GM10248 (cell line): ENCODE measurements at regions of chr12 and their contacts with region 1.

Region 1: GRCh38 chr12:54379401-54380201 is 4.9 kb downstream of the ZNF385A start:
- DNase-seq: peak; percentile 93
- CTCF ChIP-seq: peak; percentile 100

Region 2: DNA sequence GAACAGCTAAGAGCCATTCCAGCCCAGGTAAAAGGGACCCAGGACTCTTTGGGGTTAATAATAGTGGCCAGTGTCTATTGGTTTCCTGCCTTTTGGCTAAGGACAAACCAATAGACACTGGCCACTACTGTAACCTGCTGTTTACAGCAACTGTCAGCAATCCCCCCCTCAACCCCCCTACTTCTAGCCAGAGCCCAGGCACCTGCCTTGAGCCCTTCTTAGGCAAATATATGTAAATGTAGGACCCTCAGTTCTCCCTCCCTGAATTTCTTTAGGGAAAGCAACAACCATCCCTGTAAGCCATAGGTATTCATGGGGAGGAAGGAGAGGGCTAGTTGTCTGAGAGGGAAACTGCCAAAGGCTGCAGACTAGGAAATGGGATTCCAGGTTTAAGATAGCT is 303.6 kb before region 1 on chr12:
- CTCF ChIA-PET with region 1: no interaction called
- POLR2A ChIA-PET with region 1: no interaction called
- DNase-seq: no peak
- CTCF ChIP-seq: no peak

Region 3: DNA sequence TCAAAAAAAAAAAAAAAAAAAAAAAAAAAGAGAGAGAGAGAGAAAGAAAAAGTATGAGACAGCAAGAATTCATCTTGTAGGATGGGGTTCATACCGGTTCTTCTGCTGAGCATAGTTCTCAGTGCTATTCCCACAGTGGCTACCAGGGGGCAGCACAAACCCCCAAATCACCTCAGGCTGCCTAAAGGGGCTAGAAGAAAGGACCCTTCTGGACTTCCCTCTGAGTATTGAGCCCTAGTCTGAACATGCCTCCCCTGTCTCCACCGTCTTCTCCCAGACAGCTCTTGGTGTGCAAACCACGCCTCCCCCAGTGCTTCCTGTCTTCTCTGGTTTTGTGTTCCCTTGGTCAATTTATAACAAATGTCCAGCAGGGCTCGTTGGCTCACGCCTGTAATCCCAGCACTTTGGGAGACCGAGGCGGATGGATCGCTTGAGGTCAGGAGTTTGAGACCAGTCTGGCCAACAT is 159.5 kb before region 1 on chr12:
- CTCF ChIA-PET with region 1: interaction called, 35 read pairs
- POLR2A ChIA-PET with region 1: no interaction called
- DNase-seq: peak; percentile 69
- CTCF ChIP-seq: peak; percentile 89

Region 4: DNA sequence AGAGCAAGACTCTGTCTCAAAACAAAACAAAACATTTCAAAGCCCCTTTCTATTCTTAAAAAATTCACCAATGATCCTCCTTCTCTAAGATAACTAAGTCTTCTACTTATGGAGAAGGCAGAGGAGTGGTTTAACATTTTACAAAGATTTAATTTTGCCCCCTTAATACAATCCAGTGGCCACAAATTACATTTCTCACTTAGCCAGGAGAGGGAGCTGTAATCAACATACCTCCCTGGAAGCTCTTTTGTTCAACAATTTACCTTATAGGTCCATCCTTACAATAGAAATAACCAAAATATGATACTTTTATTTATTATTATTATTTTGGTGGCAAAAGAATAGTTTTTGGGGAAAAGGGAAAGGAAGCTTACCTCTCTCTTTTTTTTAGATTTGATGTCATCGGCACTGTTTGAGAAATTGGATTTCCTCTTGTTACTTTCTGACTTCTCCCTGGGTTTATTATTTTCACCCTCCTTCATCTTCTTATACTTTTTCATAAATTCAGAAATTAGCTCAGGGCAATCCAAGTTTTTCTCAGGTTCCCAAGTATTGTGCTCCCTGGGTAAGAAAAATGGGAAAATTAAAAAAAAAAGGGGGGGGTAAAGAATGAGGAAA is 127.8 kb before region 1 on chr12:
- CTCF ChIA-PET with region 1: interaction called, 39 read pairs
- POLR2A ChIA-PET with region 1: no interaction called
- DNase-seq: peak; percentile 65
- CTCF ChIP-seq: peak; percentile 66

Region 5: DNA sequence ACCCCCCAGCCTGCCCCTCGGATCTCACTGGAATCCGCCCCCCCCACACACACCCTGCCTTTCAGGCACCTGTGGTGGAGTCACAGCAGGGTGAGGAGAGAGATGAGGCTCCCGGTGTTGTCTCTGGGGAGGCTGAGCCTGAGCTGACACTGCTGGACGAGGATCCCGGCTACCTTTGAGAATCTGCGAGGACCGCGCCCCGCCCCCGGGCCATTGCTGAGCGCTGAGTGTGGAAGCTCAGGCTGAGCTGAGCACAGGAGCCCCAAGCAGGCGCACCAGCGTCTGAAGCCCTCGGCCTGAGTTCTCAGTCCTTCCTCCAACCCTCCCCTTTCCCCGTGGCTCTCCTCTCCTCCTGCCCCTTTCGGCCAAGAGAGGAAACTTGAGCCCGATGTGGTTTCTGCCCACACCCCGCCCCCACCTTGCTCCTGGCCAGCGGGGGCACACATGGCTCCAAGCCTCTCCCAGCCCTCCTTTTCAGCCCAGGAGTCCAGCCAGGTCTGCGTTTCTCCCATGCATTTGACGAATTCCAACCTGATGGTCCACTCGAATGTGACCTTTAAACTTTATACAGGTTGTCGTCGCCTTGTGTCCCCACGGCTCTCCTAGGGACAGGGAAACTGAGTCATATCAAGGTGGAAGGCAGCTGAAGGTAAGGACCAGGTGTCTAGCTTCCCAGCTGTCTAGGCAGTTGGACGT is 78.7 kb before region 1 on chr12 and contains the start of gene NFE2:
- CTCF ChIA-PET with region 1: interaction called, 20 read pairs
- POLR2A ChIA-PET with region 1: no interaction called
- DNase-seq: no peak
- CTCF ChIP-seq: no peak

Region 6: GRCh38 chr12:54359033-54359761 is 20.4 kb before region 1 on chr12:
- CTCF ChIA-PET with region 1: interaction called, 74 read pairs
- POLR2A ChIA-PET with region 1: interaction called, 5 read pairs
- DNase-seq: peak; percentile 97
- CTCF ChIP-seq: no peak

Region 7: DNA sequence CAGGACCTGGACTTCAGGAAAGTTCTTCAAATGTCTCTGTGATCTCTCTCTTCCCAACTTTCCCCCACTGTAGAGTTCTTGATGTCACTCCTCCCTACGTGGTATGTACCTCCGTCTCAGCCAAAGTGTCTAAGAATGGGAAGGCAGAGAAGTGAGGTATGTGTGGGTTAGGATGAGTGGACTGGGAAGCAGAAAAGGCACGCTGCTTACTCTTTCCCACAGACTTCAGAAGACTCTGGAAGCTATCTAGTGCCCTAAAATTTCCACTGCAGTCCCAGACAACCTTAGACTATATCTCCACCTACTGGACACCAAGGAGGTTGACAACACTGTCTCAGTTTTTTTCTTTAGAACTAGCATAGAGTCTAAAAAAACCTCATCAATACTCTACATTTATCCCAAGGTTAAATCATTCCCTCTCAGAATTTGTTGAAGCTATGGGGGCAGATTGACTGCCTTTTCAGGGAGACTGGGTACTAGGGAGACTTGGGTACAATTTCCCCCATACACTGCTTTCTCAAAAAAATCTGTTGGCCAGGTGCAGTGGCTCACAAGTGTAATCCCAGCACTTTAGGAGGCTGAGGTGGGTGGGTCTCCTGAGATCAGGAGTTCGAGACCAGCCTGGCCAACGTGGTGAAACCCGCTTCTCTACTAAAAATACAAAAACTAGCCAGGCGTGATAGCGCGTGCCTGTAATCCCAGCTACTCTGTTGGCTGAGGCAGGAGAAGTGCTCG is 60.1 kb after region 1 on chr12:
- CTCF ChIA-PET with region 1: interaction called, 11 read pairs
- POLR2A ChIA-PET with region 1: no interaction called
- DNase-seq: peak; percentile 70
- CTCF ChIP-seq: peak; percentile 72